ENCODE measurements at regions of chr1 and their contacts with region 1.

Region 1: DNA sequence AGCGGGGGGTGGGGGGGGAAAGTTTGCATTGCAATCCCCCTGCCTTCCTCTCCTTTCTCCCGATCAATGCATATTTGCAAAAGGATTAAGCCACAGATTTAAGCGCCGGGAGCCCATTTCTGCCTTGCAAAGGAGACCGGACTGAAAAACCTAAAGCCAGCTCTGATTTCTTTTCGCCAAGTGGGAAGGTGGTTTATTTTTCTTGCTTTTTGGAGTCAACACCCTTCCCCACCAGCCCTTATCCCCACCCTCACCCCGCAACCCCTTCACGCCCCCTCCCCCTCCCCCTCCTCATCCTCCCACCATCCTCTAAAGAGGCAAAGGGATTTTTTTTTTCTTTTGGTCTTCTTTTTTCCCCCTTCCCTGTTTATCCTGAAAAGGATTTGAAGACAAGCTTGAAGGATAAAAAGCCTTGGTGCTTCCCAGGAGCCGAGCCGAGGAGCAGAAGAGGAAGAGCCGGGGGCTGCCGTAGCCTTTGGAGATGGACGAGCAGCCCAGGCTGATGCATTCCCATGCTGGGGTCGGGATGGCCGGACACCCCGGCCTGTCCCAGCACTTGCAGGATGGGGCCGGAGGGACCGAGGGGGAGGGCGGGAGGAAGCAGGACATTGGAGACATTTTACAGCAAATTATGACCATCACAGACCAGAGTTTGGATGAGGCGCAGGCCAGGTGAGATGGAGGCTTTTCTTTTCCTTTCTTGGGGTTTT is 513 bp downstream of the PBX1 start:
- DNase-seq: peak; percentile 44
- ATAC-seq: peak; percentile 39 to 41

Region 2: DNA sequence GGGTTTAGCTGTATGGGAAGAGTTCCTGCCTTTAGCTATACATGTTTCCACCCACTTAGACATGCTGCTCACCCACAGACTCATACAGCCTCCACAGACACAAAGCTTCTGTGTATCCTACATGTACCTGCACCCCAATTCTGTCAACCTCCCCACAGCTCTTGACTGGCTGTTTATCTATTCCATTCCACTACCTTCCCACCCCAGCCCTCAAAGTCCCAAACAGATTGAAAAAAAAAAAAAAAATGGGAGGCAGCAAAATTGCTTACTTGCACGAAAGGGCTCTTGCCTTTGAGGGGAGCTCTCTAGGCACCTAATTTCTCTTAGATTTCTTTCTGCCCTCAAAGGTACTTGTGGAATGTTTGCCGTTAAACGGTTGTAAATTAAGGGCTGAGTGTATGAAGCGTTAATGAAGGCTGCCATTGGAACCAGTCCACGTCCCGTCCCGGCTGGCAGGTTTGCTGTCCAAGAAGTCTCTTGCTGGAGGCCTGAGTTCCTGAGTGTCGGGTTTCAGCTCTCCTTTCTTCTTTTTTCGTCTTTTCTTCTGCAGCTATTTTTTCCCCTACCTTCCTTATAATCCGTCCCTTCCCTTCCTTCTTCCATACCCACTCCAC is 43.1 kb after region 1 on chr1:
- intact Hi-C with region 1: loop called in 1 of 2 experiments (anchors 5 kb)
- DNase-seq: peak; percentile 60
- ATAC-seq: peak; percentile 78 to 79

Region 3: GRCh38 chr1:164617377-164618201 is 58.1 kb after region 1 on chr1:
- intact Hi-C with region 1: loop called in 1 of 2 experiments (anchors 5 kb)
- DNase-seq: no peak
- ATAC-seq: no peak

Region 4: DNA sequence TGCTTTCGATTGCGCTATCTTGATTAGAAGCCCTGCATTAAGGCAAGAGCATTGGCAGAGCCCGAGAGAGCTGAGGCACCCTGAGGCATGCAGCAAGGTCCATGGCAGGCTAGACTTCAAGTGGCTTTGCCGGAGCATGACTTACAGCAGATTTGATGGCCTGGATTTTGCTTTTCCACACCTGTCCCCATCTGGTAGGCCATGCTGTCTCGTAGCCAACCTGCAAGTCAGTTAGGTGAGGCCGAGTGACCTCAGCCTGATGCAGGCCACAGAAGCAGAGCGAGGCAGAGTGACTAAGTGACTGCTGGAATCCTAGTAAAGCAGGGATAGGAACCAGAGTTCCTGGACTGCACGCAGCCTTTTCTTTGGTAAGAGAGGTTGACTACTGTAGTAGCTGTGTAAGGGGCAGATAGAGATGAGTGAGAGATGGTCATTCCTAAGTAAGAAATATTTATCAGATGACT is 148.4 kb after region 1 on chr1:
- intact Hi-C with region 1: loop called in 1 of 2 experiments (anchors 10 kb)
- DNase-seq: peak; percentile 49
- ATAC-seq: peak in 1 of 2 donors; percentile 62